ENCODE measurements at regions of chr14 and their contacts with region 1.

Region 1: DNA sequence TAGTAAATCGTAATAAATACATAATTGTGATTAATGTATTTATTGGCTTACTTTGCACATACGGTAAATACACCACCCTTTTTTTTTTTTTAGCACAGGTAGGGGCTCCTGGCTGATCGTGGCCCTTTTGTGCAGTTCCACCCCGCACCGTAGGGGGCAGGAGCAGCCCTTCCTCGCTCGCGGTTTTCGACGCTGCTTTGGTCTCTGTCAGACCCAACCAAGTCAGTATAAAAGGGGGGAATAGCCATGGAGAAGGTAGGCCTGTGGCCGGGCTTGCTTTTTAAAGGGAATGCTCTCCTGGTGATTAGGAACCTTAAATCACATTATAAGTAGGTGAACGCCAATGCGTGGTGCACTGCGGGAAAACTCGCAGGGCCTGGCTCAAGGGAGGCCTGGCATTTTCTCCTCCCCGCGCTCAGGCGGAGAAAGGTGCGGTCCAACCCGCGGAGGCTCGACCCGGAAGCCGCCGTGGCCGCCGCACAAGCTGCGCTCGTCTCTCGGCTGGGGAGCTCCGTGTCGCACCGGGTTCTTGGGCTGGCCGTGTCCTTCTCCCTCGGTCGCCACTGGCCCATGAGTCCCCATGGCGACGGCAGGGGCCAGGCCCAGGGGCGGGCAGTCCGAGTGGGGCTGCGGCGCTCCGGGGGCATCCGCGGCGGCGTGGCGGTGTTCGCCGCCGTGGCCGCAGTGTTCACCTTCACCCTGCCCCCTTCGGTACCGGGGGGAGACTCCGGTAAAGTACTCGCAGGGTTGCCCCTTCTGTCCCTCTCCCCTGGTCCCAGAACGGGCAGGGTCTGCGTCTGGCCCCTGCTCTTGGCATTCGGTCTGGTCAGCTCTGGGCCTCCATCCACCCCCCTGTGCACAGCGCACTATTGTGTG is at the start of gene TMEM260:
- DNase-seq: peak; percentile 84
- ATAC-seq: peak; percentile 99
- H3K4me3 ChIP-seq: peak within 1 kb of the TSS; percentile 94
- H3K27ac ChIP-seq: peak within 1 kb of the TSS; percentile 94
- H3K4me1 ChIP-seq: no peaks in the 10 kb centered on the region
- H3K27me3 ChIP-seq: no peaks in the 10 kb centered on the region; the same call in 1 of the 2 replicates
- CTCF ChIP-seq: peak; percentile 81
- POLR2A ChIP-seq: peak; percentile 88
- RAD21 ChIP-seq: peak; percentile 10; the same call in 1 of the 2 replicates
- total RNA-seq, gene TMEM260: 11.5 and 13.3 TPM in 2 replicates

Region 2: DNA sequence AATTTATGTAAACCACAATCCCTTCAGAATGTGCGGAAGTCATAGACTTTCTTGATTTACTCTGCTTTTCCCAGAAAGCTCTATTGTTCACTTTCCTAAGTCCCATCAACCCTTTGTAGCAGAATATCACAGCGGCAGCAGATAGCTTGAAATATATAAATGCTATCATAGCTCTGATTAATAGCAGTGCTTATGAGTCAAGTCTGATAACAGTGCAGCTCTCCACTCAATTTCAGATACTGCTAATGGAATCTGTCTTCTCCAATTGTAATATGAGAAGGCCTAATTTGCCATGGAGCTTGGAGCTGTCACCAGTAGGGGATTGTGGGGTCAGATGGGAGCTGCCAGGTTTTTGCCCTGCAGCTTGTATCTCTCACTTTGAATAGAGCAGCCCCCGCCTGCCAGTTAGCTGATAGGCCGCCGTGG is 11.0 kb after region 1 on chr14:
- CTCF ChIA-PET with region 1: interaction called, 12 read pairs
- POLR2A ChIA-PET with region 1: no interaction called
- dilution Hi-C with region 1: no loop called
- in situ Hi-C with region 1: no loop called
- intact Hi-C with region 1: no loop called
- DNase-seq: no peak
- ATAC-seq: no peak
- H3K4me3 ChIP-seq: no peak overlapping the region
- H3K27ac ChIP-seq: no peak overlapping the region
- H3K4me1 ChIP-seq: no peaks in the 10 kb centered on the region
- H3K27me3 ChIP-seq: no peaks in the 10 kb centered on the region
- CTCF ChIP-seq: no peak
- POLR2A ChIP-seq: no peak
- RAD21 ChIP-seq: no peak